ENCODE measurements at regions of chr2 and their contacts with region 1.

Region 1: GRCh38 chr2:31467418-31467817 is 52.9 kb upstream of the XDH start:
- DNase-seq: peak; percentile 42
- H3K4me3 Mint-ChIP-seq: no peak overlapping the region
- H3K27ac Mint-ChIP-seq: no peak overlapping the region
- H3K4me1 Mint-ChIP-seq: peaks cover 8% of the 10 kb centered on the region
- H3K27me3 Mint-ChIP-seq: peaks cover 14% of the 10 kb centered on the region
- CTCF ChIP-seq: no peak

Region 2: GRCh38 chr2:31420936-31421335 is 46.5 kb before region 1 on chr2:
- CTCF ChIA-PET with region 1: no interaction called
- intact Hi-C with region 1: no loop called
- DNase-seq: no peak
- H3K4me3 Mint-ChIP-seq: no peak overlapping the region
- H3K27ac Mint-ChIP-seq: no peak overlapping the region
- H3K4me1 Mint-ChIP-seq: peaks cover 25% of the 10 kb centered on the region
- H3K27me3 Mint-ChIP-seq: no peaks in the 10 kb centered on the region
- CTCF ChIP-seq: no peak

Region 3: DNA sequence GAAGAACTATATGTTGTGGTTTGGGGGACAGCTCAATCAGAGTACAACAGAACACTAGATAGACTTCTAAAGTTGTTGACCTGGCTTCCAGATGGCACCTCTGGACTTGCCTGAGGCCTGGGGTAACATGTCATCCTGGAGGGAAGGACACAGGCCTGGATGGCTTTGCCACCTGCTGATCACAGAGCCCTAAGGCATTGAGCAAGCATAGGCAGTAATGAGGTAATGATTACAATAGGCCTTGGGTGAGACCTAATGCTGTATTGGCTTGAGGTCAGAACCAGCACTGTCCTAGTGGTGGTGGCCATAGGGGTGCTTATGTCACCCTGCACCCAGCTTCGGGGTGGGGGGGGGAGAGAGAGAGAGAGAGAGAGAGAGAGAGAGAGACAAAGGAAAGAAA is 16.1 kb before region 1 on chr2:
- CTCF ChIA-PET with region 1: no interaction called
- intact Hi-C with region 1: no loop called
- DNase-seq: no peak
- H3K4me3 Mint-ChIP-seq: no peak overlapping the region
- H3K27ac Mint-ChIP-seq: no peak overlapping the region
- H3K4me1 Mint-ChIP-seq: no peaks in the 10 kb centered on the region
- H3K27me3 Mint-ChIP-seq: peaks cover 59% of the 10 kb centered on the region
- CTCF ChIP-seq: no peak

Region 4: GRCh38 chr2:31644551-31644950 is 177.1 kb after region 1 on chr2:
- CTCF ChIA-PET with region 1: no interaction called
- intact Hi-C with region 1: loop called (anchors 10 kb)
- DNase-seq: no peak
- H3K4me3 Mint-ChIP-seq: no peak overlapping the region
- H3K27ac Mint-ChIP-seq: no peak overlapping the region
- H3K4me1 Mint-ChIP-seq: no peaks in the 10 kb centered on the region
- H3K27me3 Mint-ChIP-seq: no peaks in the 10 kb centered on the region
- CTCF ChIP-seq: no peak